Vagina (tissue), 2 donors: ENCODE measurements at regions of chr4 and their contacts with region 1.

Region 1: DNA sequence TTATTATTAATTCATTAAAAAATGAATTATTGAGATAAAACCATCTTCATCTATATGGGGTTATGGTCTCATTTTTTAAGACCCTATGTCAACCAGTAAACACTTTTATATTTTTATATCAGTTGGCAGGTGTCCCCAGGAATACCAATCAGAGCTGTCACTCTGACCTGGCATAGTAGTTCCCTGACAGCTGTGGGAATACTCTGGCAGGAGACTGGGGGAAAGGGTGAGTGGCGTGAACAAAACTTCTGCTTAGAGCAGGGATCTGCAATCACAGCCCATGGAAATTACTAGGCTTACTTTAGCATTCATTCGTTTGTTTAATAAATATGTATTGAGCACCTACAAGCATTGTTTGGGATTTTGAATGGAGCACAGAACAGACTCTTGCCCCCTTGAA is 254.1 kb upstream of the KLF3 start:
- DNase-seq: no peak
- H3K4me3 ChIP-seq: no peak overlapping the region
- H3K27ac ChIP-seq: no peak overlapping the region
- H3K4me1 ChIP-seq: no peaks in the 10 kb centered on the region
- H3K27me3 ChIP-seq: no peaks in the 10 kb centered on the region
- CTCF ChIP-seq: no peak
- POLR2A ChIP-seq: no peak

Region 2: GRCh38 chr4:40340030-40340429 is 1930.2 kb after region 1 on chr4:
- intact Hi-C with region 1: loop called (anchors 5 kb)
- DNase-seq: no peak
- H3K4me3 ChIP-seq: no peak overlapping the region
- H3K27ac ChIP-seq: no peak overlapping the region
- H3K4me1 ChIP-seq: no peaks in the 10 kb centered on the region
- H3K27me3 ChIP-seq: no peaks in the 10 kb centered on the region
- CTCF ChIP-seq: no peak
- POLR2A ChIP-seq: no peak